Left colon (tissue), 2 donors: ENCODE measurements at regions of chr17 and their contacts with region 1.

Region 1: DNA sequence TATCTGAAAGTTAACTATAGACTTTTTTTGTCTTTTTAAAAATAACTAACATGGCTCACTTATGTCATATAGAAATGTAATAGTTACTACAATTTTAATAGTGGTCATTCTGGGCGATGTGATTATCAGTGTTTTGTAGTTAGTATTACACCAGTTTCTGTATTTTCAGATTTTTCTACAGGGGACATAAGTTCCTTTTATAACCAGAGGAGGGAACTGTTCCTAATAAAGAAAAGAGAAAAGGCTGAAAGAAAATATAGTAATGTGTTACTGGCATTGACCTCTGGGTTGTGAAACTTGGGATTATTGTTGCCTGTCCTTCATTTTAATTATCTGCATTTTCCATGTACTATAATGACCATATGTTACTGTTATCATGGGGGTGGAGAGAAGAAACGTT is 138.7 kb downstream of the AXIN2 start:
- DNase-seq: no peak
- ATAC-seq: no peak

Region 2: DNA sequence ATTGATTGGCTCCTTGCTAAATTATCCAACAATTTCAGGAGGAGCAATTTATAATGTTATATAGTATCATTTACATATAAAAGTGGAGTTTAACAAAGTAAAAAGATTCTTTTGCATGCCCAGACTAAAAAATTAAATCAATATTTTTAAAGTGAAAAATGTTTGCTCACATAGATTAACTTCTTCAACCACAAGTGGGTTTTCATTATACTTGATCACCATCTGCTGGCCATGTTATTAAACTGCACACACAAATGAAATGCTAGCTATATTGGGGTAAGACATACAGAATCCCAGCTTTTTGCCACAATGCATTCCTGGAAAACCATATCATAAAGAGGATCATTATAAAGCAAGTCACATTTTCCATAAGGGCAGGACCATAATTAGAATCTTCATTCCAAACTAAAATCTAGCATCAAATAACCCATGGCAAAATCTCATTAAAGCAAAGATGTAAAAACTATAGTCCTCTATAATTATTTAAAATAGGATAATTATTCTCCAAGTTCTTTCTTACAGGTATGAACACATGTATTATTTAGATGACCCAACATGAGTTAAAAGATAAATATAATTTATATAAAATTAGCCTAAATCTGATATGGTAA is 742.9 kb after region 1 on chr17:
- intact Hi-C with region 1: loop called in 1 of 2 experiments (anchors 10 kb)
- DNase-seq: no peak
- ATAC-seq: peak; percentile 63